ENCODE measurements at regions of chr10 and their contacts with region 1.

Region 1: GRCh38 chr10:101840741-101841453 is 2.7 kb downstream of the KCNIP2 start:
- DNase-seq: peak; percentile 85
- H3K4me3 ChIP-seq: peak overlapping the region; percentile 17 to 45 (median 26)
- H3K27ac ChIP-seq: no peak overlapping the region
- H3K4me1 ChIP-seq: peaks cover 13% of the 10 kb centered on the region
- H3K27me3 ChIP-seq: no peaks in the 10 kb centered on the region
- CTCF ChIP-seq: peak; percentile 98 to 99
- POLR2A ChIP-seq: no peak

Region 2: DNA sequence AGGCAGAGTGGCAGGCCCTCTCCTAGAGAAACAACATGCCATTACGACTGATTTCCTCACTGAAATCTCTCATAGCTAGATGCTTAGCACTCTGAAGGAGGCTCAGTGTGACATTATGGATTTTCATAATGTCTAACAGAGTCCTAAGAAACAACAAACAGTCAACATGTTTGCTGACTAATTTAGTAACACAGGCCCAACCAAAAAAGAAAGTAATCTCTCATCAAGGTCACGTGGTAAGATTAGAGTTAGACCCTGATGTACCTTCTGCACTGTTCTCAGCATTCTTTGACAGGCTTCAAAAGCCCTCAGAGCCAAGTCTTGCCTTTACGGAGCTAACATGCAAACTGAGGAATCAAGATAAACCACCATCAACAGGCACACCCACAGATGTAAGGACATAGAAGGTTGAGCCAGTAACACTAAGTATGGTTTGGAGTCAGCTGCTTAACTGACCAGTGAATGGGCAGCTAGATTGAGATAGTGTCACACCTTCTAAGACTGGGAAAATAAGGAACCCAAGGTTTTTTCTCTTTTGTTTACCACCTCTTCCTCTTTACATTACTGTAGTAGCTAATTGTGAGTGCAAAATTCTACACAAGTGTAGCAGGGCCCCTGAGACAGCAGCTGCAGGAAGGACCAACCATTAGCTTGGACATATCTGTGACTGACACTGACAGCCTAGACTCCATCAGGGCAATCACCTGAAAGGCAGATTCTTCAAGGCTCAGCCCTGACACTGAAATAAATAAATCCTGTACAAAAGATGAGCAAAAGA is 18.0 kb after region 1 on chr10:
- CTCF ChIA-PET with region 1: interaction called, 43 read pairs
- POLR2A ChIA-PET with region 1: no interaction called
- dilution Hi-C with region 1: no loop called
- intact Hi-C with region 1: no loop called
- DNase-seq: no peak
- H3K4me3 ChIP-seq: no peak overlapping the region
- H3K27ac ChIP-seq: no peak overlapping the region
- H3K4me1 ChIP-seq: peaks cover 12% of the 10 kb centered on the region
- H3K27me3 ChIP-seq: no peaks in the 10 kb centered on the region
- CTCF ChIP-seq: no peak
- POLR2A ChIP-seq: no peak

Region 3: GRCh38 chr10:101938316-101939281 is 97.7 kb after region 1 on chr10:
- CTCF ChIA-PET with region 1: interaction called, 24 read pairs
- POLR2A ChIA-PET with region 1: no interaction called
- dilution Hi-C with region 1: no loop called
- intact Hi-C with region 1: loop called (anchors 5 kb)
- DNase-seq: peak; percentile 97
- H3K4me3 ChIP-seq: no peak overlapping the region
- H3K27ac ChIP-seq: peak overlapping the region; percentile 92
- H3K4me1 ChIP-seq: peaks cover 49% of the 10 kb centered on the region
- H3K27me3 ChIP-seq: no peaks in the 10 kb centered on the region
- CTCF ChIP-seq: no peak
- POLR2A ChIP-seq: peak; percentile 53

Region 4: GRCh38 chr10:101974091-101974971 is 133.4 kb after region 1 on chr10:
- CTCF ChIA-PET with region 1: interaction called, 15 read pairs
- POLR2A ChIA-PET with region 1: no interaction called
- dilution Hi-C with region 1: no loop called
- intact Hi-C with region 1: no loop called
- DNase-seq: peak; percentile 29
- H3K4me3 ChIP-seq: peak overlapping the region in 1 of 3 experiments; percentile 5
- H3K27ac ChIP-seq: peak overlapping the region; percentile 25
- H3K4me1 ChIP-seq: peaks cover 16% of the 10 kb centered on the region
- H3K27me3 ChIP-seq: no peaks in the 10 kb centered on the region
- CTCF ChIP-seq: no peak
- POLR2A ChIP-seq: no peak

Region 5: DNA sequence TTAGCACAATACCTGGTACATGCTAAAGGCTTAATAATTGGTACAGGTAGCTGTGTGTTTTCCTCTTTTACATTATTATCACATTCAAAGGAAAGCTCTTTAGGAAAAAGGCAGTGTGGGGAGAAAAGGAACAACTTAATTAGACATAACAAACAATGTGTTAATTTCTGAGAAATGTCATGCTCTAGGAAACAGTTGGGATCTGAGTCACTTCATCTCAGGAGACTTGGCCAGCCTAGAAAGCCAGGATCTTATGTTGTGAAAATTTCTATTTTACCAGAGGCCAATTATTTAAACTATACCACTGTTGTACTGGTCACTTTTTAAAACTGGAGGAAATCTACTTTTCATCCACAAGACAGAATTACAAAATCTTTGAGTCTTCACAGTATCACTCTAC is 175.5 kb after region 1 on chr10:
- CTCF ChIA-PET with region 1: interaction called, 742 read pairs
- POLR2A ChIA-PET with region 1: no interaction called
- dilution Hi-C with region 1: no loop called
- intact Hi-C with region 1: no loop called
- DNase-seq: peak; percentile 59
- H3K4me3 ChIP-seq: no peak overlapping the region
- H3K27ac ChIP-seq: no peak overlapping the region
- H3K4me1 ChIP-seq: peaks cover 11% of the 10 kb centered on the region
- H3K27me3 ChIP-seq: no peaks in the 10 kb centered on the region
- CTCF ChIP-seq: no peak
- POLR2A ChIP-seq: no peak

Region 6: DNA sequence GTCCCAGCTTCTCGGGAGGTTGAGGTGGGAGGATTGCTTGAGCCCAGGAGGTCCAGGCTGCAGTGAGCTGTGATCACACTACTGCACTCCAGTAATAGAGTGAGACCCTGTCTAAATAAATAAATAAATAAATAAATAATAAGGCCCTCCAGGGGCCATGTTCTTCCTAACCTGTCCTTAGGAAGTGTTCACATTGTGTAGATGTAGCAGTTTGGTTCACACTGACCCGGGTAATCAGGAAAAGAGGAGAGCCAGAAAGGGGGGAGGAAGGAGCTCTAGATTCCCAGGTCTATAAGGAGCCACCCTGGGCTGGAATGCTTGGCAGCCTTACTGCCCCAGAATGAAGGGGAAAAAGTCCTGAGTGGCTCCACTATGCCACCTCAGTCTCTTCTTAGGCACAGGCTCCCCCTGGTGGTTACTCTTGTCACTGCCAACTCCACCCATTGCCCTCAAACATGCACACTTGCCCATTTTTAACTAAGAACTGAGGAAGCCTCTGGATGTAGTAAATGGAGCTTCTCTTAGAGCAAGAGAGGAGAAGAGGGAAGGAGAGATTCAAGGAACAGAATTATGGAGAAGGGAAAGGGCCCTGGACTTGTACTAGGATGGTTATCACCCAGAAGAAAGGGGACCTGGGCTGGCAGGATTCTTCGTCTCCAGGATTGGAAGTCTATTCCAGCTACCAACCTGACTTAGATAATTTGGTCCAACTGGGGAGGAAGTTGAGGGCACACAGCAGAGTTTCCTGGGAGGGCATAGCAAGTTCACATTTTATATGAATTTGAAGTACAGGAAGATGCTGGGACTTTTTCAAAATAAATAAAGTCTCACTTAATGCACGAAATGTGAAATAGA is 232.0 kb after region 1 on chr10:
- CTCF ChIA-PET with region 1: interaction called, 129 read pairs
- POLR2A ChIA-PET with region 1: no interaction called
- dilution Hi-C with region 1: no loop called
- intact Hi-C with region 1: loop called (anchors 1 kb)
- DNase-seq: peak; percentile 81
- H3K4me3 ChIP-seq: no peak overlapping the region
- H3K27ac ChIP-seq: no peak overlapping the region
- H3K4me1 ChIP-seq: no peaks in the 10 kb centered on the region
- H3K27me3 ChIP-seq: peaks cover 0 to 2% of the 10 kb centered on the region in 2 experiments
- CTCF ChIP-seq: peak; percentile 91 to 98
- POLR2A ChIP-seq: no peak